Ascending aorta (tissue), 2 donors: ENCODE measurements at regions of chr22 and their contacts with region 1.

Region 1: DNA sequence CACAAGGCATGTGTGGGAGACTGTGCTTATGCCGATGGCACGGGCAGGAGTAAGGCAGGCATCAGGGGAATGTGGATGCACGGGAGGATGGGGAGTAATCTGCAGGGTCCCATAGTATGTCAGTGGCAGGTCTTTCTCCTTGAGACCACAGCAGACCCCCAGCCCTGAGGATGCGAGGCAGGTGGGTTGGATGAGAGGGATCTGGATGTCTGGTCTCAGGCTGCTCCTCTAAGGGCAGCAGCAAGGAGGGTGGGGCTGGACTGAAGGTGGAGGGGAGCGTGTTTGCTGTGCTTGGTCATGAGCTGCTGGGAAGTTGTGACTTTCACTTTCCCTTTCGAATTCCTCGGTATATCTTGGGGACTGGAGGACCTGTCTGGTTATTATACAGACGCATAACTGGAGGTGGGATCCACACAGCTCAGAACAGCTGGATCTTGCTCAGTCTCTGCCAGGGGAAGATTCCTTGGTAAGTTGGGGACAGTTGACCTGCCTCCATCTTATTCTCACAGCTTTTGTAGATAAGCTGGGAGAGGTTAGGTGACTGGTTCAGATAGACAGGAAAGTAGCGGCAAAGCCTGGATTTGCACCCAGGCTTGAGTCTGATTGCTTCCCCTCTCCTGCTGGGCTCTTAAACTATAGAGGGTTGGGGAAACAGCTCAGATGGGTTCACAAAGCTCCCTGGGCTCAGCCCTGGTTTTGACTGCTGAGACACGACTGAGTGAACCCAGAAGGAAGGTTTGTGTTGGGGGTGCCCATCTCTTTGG is at the start of gene APOL1:
- DNase-seq: no peak
- H3K4me3 ChIP-seq: peak within 1 kb of the TSS; percentile 52 to 63
- H3K27ac ChIP-seq: peak within 1 kb of the TSS; percentile 69 to 78
- H3K4me1 ChIP-seq: peaks cover 0 to 18% of the 10 kb centered on the region in 2 donors
- H3K27me3 ChIP-seq: no peaks in the 10 kb centered on the region
- CTCF ChIP-seq: no peak
- total RNA-seq, gene APOL1: 30.1 TPM

Region 2: DNA sequence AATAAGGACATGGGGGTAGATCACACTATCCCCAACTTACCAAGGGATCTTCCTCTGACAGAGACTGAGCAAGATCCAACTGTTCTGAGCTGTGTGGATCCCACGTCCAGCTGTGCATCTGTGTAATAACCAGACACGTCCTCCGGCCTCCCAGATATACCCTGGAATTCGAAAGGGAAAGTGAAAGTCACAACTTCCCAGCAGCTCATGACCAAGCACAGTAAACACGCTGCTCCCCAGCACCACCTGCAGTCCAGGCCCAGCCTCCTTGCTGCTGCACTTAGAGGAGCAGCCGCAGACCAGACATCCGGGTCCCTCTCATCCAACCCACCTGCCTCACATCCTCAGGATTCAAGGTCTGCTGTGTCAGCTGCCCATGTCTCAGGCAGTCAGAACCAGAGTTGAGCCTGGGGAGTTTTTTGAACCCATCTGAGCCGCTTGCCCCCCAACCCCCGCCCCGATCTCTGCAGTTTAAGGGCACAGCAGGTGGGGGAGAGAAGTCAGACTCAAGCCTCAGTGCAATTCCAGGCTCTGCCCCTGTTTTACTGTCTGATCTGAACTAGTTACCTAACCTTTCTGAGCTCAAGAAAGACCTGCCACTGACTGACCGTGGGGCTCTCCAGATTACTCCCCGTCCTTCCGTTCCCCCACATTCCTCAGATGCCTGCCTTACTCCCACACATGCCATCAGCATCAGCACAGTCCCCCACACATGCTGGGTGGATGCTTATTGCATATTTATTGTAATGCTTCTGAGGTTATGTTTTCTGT is 13.3 kb before region 1 on chr22 and contains the start of gene APOL2:
- intact Hi-C with region 1: loop called (anchors 1 kb)
- DNase-seq: peak; percentile 80 to 96
- H3K4me3 ChIP-seq: peak within 1 kb of the TSS; percentile 70 to 81
- H3K27ac ChIP-seq: peak within 1 kb of the TSS; percentile 86 to 90
- H3K4me1 ChIP-seq: peaks cover 10 to 36% of the 10 kb centered on the region in 2 donors
- H3K27me3 ChIP-seq: no peaks in the 10 kb centered on the region
- CTCF ChIP-seq: peak; percentile 50 to 79 (median 71)
- total RNA-seq, gene APOL2: 34.3 TPM

Region 3: GRCh38 chr22:36684841-36685240 is 431.9 kb after region 1 on chr22:
- intact Hi-C with region 1: no loop called
- DNase-seq: no peak
- H3K4me3 ChIP-seq: no peak overlapping the region
- H3K27ac ChIP-seq: no peak overlapping the region
- H3K4me1 ChIP-seq: no peaks in the 10 kb centered on the region
- H3K27me3 ChIP-seq: no peaks in the 10 kb centered on the region
- CTCF ChIP-seq: no peak